ENCODE measurements at regions of chr19 and their contacts with region 1.

Region 1: DNA sequence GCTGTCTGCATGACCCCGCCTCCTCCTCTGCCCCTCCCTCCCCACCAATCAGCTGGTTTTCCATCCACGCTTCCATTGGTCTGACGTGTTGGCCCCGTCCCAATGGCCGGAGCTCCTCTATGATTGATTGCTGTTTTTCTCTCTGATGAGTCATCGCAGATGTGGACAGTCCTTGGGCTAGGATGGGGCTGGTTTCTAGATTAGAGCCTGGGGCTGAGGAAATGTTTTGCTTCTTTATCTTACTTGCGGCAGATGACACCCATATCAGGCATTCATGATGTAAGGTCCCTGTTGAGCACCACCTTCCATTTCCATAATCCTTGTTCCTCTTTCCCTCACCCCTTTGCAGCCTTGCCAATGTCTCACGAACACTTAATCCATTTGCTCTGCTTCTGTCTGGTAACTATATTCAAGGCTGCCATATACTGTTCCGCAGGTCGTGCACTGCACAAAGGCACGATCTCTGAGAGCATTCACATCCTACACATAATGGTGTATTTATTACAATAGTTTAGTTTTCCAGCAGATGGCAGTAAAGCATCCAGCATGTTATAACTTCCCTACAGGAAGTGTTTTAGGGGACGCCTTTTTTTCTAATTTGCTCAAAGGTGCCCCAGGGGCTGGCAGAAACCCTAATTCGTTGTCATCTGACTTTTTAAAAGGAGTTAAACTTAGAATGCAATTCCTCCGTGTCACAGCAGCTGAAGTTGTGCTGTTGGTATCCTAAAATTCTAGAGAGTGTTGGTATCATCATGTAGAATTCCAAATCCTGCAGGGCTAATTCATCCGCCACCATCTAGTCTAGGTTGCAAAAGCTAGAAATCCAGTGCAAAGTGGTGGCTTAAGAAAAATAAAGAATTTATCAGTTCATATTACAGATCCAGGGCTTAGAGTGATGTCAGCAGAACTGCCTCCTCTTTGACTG is 73.5 kb downstream of the MAP4K1 start:
- DNase-seq: peak; percentile 98 to 100 (median 98)
- ATAC-seq: peak; percentile 96
- H3K4me3 ChIP-seq: peak overlapping the region; percentile 56
- H3K27ac ChIP-seq: peak overlapping the region; percentile 92
- H3K4me1 ChIP-seq: peaks cover 16 to 23% of the 10 kb centered on the region in 2 experiments
- H3K27me3 ChIP-seq: no peaks in the 10 kb centered on the region
- CTCF ChIP-seq: peak; percentile 64 to 84 (median 82)
- EP300 ChIP-seq: peak; percentile 90
- POLR2A ChIP-seq: no peak
- RAD21 ChIP-seq: peak; percentile 85 to 88

Region 2: DNA sequence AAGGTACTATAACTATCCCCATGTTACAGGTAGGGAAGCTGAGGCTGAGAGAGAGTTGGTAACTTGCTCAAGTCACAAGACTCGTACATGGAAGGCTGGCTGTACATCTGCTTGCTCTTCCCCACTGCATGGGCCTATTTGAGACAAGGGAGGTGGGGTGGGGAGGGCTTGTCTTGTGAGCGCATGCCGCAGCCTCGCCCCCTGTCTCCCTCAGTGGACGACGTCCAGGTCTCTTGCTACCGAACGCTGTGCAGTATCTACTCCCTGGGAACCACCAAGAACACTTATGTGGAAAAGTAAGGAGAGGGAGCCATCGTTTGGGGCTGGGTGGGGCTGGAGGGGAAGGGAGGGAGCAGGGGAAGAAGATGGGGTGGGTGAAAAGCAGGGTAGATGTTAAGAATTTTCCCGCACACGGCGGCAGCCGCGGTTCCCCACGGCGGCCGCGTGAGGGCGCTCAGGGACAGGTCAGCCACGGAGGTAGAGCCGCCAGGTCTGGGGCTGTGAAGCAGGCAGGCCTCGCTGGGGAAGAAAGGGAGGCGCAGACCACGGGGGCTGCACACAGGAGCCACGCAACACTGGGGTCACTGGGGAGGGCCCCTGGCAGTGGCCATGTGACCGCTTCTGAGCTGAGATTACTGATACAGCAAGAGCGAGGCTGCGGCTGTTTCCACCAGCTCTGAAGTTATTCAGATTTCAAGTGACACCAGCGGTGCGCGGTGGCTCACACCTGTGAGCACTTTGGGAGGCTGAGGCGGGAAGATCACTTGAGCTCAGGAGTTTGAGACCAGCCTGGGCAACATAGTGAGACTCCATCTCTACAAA is 29.3 kb before region 1 on chr19:
- CTCF ChIA-PET with region 1: no interaction called
- POLR2A ChIA-PET with region 1: no interaction called
- in situ Hi-C with region 1: no loop called
- intact Hi-C with region 1: loop called (anchors 2 kb)
- DNase-seq: peak; percentile 84 to 87 (median 86)
- ATAC-seq: peak; percentile 98
- H3K4me3 ChIP-seq: no peak overlapping the region
- H3K27ac ChIP-seq: no peak overlapping the region
- H3K4me1 ChIP-seq: peaks cover 6 to 27% of the 10 kb centered on the region in 2 experiments; a peak in 4 of 5 replicates
- H3K27me3 ChIP-seq: no peaks in the 10 kb centered on the region
- CTCF ChIP-seq: peak; percentile 86 to 93 (median 90)
- EP300 ChIP-seq: no peak
- POLR2A ChIP-seq: no peak
- RAD21 ChIP-seq: peak; percentile 88 to 92

Region 3: GRCh38 chr19:38532939-38533338 is 11.4 kb before region 1 on chr19:
- CTCF ChIA-PET with region 1: no interaction called
- POLR2A ChIA-PET with region 1: interaction called, 11 read pairs
- in situ Hi-C with region 1: no loop called
- intact Hi-C with region 1: no loop called
- DNase-seq: no peak
- ATAC-seq: no peak
- H3K4me3 ChIP-seq: no peak overlapping the region
- H3K27ac ChIP-seq: no peak overlapping the region
- H3K4me1 ChIP-seq: peaks cover 4 to 10% of the 10 kb centered on the region in 2 experiments; a peak in 4 of 5 replicates
- H3K27me3 ChIP-seq: no peaks in the 10 kb centered on the region
- CTCF ChIP-seq: no peak
- EP300 ChIP-seq: no peak
- POLR2A ChIP-seq: no peak
- RAD21 ChIP-seq: no peak

Region 4: DNA sequence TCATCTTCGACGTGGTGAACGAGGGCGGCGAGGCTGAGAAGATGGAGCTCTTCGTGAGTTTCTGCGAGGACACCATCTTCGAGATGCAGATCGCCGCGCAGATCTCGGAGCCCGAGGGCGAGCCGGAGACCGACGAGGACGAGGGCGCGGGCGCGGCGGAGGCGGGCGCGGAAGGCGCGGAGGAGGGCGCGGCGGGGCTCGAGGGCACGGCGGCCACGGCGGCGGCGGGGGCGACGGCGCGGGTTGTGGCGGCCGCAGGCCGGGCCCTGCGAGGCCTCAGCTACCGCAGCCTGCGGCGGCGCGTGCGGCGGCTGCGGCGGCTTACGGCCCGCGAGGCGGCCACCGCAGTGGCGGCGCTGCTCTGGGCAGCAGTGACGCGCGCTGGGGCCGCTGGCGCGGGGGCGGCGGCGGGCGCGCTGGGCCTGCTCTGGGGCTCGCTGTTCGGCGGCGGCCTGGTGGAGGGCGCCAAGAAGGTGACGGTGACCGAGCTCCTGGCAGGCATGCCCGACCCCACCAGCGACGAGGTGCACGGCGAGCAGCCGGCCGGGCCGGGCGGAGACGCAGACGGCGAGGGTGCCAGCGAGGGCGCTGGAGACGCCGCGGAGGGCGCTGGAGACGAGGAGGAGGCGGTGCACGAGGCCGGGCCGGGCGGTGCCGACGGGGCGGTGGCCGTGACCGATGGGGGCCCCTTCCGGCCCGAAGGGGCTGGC is 20.8 kb after region 1 on chr19:
- CTCF ChIA-PET with region 1: no interaction called
- POLR2A ChIA-PET with region 1: no interaction called
- in situ Hi-C with region 1: no loop called
- intact Hi-C with region 1: no loop called
- DNase-seq: no peak
- ATAC-seq: no peak
- H3K4me3 ChIP-seq: no peak overlapping the region
- H3K27ac ChIP-seq: no peak overlapping the region
- H3K4me1 ChIP-seq: peaks cover 0 to 21% of the 10 kb centered on the region in 2 experiments; a peak in 2 of 5 replicates
- H3K27me3 ChIP-seq: no peaks in the 10 kb centered on the region
- CTCF ChIP-seq: no peak
- EP300 ChIP-seq: no peak
- POLR2A ChIP-seq: no peak
- RAD21 ChIP-seq: no peak

Region 5: DNA sequence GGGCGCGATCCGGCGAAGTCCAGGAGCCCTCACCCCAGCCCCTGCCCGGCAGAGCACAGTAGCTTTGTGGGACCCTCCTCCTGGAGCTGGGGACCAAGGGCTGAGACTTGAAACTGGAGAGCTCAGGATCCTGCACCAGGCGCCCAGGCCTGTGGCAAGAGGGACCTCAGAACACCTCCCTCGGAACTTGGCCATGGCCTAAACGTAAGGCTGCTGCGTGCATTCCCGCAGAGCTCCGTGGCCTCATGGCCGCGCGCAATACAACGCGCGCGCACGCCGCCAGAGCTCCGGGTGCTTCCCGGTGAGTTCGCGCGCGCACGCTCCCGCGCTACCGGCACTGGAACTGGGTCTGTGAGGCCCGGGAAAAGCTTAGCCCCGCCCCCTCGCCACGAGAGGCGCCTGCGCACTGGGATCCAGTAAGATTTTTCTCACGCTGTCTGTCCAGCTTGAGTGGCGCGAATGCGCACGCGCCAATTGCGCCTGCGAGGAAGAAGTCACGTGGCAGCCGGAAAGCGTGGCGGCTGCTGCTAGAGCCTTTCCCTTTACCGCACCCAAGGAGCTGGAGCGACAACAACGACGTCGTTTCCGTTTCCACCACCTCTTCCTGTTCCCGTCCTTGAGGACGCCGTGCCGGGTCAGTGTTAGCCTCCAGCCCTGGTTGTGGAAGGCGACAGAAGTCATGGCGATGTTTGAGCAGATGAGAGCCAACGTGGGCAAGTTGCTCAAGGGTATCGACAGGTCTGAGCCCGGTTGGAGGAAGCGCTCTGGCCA is 74.5 kb after region 1 on chr19 and contains the start of gene EIF3K:
- CTCF ChIA-PET with region 1: no interaction called
- POLR2A ChIA-PET with region 1: interaction called, 6 read pairs
- in situ Hi-C with region 1: no loop called
- intact Hi-C with region 1: loop called (anchors 2 kb)
- DNase-seq: peak; percentile 98 to 99 (median 98)
- ATAC-seq: peak; percentile 92
- H3K4me3 ChIP-seq: peak within 1 kb of the TSS; percentile 93
- H3K27ac ChIP-seq: peak within 1 kb of the TSS; percentile 94
- H3K4me1 ChIP-seq: peaks cover 13 to 29% of the 10 kb centered on the region in 2 experiments; a peak in 4 of 5 replicates
- H3K27me3 ChIP-seq: no peaks in the 10 kb centered on the region
- CTCF ChIP-seq: no peak
- EP300 ChIP-seq: no peak
- POLR2A ChIP-seq: peak; percentile 98
- RAD21 ChIP-seq: 0 out of 4 replicates have a peak, but pooled peaks of 1 of the 2 experiments have one; percentile 8
- polyA plus RNA-seq, gene EIF3K: 1,193 to 1,486 TPM

Region 6: DNA sequence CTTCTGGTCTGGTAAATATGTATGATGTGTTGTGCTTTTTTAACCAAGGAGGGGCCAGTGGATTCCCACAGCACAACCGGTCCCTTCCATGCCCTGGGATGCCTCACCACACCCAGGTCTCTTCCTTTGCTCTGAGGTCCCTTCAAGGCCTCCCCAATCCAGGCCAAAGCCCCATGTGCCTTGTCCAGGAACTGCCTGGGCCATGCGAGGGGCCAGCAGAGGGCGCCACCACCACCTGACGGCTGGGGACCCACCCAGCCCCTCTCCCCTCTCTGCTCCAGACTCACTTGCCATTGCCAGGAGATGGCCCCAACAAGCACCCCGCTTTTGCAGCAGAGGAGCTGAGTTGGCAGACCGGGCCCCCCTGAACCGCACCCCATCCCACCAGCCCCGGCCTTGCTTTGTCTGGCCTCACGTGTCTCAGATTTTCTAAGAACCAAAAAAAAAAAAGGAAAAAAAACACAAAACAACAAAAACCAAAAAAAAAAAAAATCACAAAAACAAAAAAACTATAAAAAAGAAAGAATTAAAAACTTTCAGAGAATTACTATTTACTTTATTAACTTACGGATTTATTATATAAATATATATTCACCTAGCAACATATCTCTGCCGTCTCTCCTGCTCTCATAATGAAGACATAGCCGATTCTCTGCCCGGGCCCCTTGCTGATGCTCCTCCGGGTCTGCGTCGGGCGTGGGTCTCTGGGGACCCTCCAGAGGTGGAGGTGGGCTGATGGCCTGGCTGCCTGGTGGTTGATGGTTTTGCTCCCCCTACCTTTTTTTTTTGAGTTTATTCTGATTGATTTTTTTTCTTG is 185.6 kb after region 1 on chr19:
- CTCF ChIA-PET with region 1: interaction called, 3 read pairs
- POLR2A ChIA-PET with region 1: no interaction called
- in situ Hi-C with region 1: no loop called
- intact Hi-C with region 1: loop called (anchors 10 kb)
- DNase-seq: peak; percentile 66 to 87 (median 72)
- ATAC-seq: peak; percentile 91
- H3K4me3 ChIP-seq: no peak overlapping the region
- H3K27ac ChIP-seq: peak overlapping the region; percentile 49; the same call in 1 of the 3 replicates
- H3K4me1 ChIP-seq: peaks cover 19 to 61% of the 10 kb centered on the region in 2 experiments
- H3K27me3 ChIP-seq: no peaks in the 10 kb centered on the region
- CTCF ChIP-seq: peak; percentile 84 to 96 (median 88)
- EP300 ChIP-seq: no peak
- POLR2A ChIP-seq: no peak
- RAD21 ChIP-seq: peak; percentile 61 to 75

Measured in K562 (cell line).